ENCODE measurements at regions of chr6 and their contacts with region 1.

Region 1: GRCh38 chr6:56814308-56814707 is 140.6 kb upstream of the BEND6 start:
- DNase-seq: peak; percentile 47
- ATAC-seq: peak; percentile 79
- H3K4me3 ChIP-seq: peak overlapping the region; percentile 18; the same call in 1 of the 2 replicates
- H3K27ac ChIP-seq: peak overlapping the region; percentile 22; the same call in 1 of the 2 replicates
- H3K4me1 ChIP-seq: peaks cover 33% of the 10 kb centered on the region
- H3K27me3 ChIP-seq: no peaks in the 10 kb centered on the region
- CTCF ChIP-seq: no peak
- EP300 ChIP-seq: 0 out of 4 replicates have a peak, but pooled peaks of 1 of the 2 experiments have one; percentile 11
- POLR2A ChIP-seq: no peak
- RAD21 ChIP-seq: no peak

Region 2: DNA sequence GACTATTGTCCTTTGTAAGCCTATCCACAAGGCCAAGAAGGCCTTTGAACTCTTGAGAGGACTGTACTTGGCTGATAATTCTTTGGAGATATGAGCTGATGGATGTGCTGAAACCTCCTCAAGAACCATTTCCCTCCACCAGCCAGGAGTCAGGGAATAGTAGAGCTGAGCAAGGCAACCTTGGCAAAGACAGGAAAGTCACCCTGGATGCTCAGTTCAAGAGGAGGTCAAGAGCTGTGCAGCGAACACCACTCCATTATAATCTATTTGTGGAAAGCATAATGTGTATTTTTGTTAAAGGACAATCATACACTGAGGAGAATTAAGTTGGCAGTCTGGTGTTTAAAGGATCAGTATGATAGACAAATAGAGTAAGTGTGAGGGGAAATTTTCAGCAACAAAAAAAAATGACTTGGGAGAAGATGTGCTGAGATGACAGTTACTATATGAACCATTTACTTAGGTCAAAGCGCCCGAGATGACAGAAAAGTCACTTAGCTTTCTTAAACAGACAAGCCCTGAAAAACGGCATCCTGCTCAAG is 389.7 kb before region 1 on chr6:
- CTCF ChIA-PET with region 1: no interaction called
- POLR2A ChIA-PET with region 1: no interaction called
- RAD21 ChIA-PET with region 1: no interaction called
- SMC1A ChIA-PET with region 1: no interaction called
- in situ Hi-C with region 1: no loop called
- intact Hi-C with region 1: no loop called
- DNase-seq: no peak
- ATAC-seq: no peak
- H3K4me3 ChIP-seq: no peak overlapping the region
- H3K27ac ChIP-seq: no peak overlapping the region
- H3K4me1 ChIP-seq: no peaks in the 10 kb centered on the region
- H3K27me3 ChIP-seq: no peaks in the 10 kb centered on the region; a peak in 1 of 4 replicates
- CTCF ChIP-seq: no peak
- EP300 ChIP-seq: no peak
- POLR2A ChIP-seq: no peak
- RAD21 ChIP-seq: no peak

Region 3: DNA sequence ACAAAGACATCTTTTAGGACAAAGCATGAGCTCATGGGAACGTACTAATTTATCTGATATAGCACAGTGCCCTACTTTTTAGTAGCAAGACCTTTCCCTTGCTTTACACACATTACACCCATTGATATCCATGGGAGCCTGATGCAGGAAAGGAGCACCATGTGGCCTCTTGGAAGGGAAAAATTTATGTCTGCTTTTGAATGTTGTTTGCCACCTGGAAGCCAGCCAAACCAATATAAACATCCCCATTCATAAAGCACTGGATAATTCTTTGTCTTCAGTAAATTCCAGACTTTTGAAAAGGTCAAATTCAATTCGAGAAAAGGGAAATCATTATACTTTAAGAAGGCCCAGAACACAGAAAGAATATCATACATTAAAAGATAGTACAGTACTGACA is 11.7 kb before region 1 on chr6:
- CTCF ChIA-PET with region 1: interaction called, 8 read pairs
- POLR2A ChIA-PET with region 1: interaction called, 11 read pairs
- RAD21 ChIA-PET with region 1: interaction called, 7 read pairs
- SMC1A ChIA-PET with region 1: interaction called, 20 read pairs
- in situ Hi-C with region 1: no loop called
- intact Hi-C with region 1: no loop called
- DNase-seq: no peak
- ATAC-seq: no peak
- H3K4me3 ChIP-seq: no peak overlapping the region
- H3K27ac ChIP-seq: no peak overlapping the region
- H3K4me1 ChIP-seq: peaks cover 19% of the 10 kb centered on the region; the same call in 1 of the 2 replicates
- H3K27me3 ChIP-seq: no peaks in the 10 kb centered on the region
- CTCF ChIP-seq: no peak
- EP300 ChIP-seq: no peak
- POLR2A ChIP-seq: no peak
- RAD21 ChIP-seq: no peak

Region 4: GRCh38 chr6:56833127-56833791 is 19.0 kb after region 1 on chr6:
- CTCF ChIA-PET with region 1: interaction called, 10 read pairs
- POLR2A ChIA-PET with region 1: interaction called, 12 read pairs
- RAD21 ChIA-PET with region 1: interaction called, 4 read pairs
- SMC1A ChIA-PET with region 1: interaction called, 14 read pairs
- in situ Hi-C with region 1: no loop called
- intact Hi-C with region 1: no loop called
- DNase-seq: no peak
- ATAC-seq: peak; percentile 75
- H3K4me3 ChIP-seq: no peak overlapping the region
- H3K27ac ChIP-seq: no peak overlapping the region
- H3K4me1 ChIP-seq: peaks cover 21% of the 10 kb centered on the region; the same call in 1 of the 2 replicates
- H3K27me3 ChIP-seq: no peaks in the 10 kb centered on the region
- CTCF ChIP-seq: no peak
- EP300 ChIP-seq: no peak
- POLR2A ChIP-seq: no peak
- RAD21 ChIP-seq: no peak